ENCODE measurements at regions of chr7 and their contacts with region 1.

Region 1: GRCh38 chr7:5677538-5678294 is 103.7 kb downstream of the RNF216 start:
- DNase-seq: peak; percentile 76
- H3K4me3 Mint-ChIP-seq: no peak overlapping the region
- H3K27ac Mint-ChIP-seq: peak overlapping the region; percentile 39
- H3K4me1 Mint-ChIP-seq: peaks cover 12% of the 10 kb centered on the region
- H3K27me3 Mint-ChIP-seq: no peaks in the 10 kb centered on the region
- CTCF ChIP-seq: peak; percentile 75

Region 2: GRCh38 chr7:5557920-5558401 is 119.8 kb before region 1 on chr7:
- CTCF ChIA-PET with region 1: interaction called, 13 read pairs
- POLR2A ChIA-PET with region 1: interaction called, 3 read pairs
- intact Hi-C with region 1: no loop called
- DNase-seq: peak; percentile 67
- H3K4me3 Mint-ChIP-seq: peak overlapping the region; percentile 66
- H3K27ac Mint-ChIP-seq: peak overlapping the region; percentile 73
- H3K4me1 Mint-ChIP-seq: peaks cover 23% of the 10 kb centered on the region
- H3K27me3 Mint-ChIP-seq: no peaks in the 10 kb centered on the region
- CTCF ChIP-seq: no peak

Region 3: DNA sequence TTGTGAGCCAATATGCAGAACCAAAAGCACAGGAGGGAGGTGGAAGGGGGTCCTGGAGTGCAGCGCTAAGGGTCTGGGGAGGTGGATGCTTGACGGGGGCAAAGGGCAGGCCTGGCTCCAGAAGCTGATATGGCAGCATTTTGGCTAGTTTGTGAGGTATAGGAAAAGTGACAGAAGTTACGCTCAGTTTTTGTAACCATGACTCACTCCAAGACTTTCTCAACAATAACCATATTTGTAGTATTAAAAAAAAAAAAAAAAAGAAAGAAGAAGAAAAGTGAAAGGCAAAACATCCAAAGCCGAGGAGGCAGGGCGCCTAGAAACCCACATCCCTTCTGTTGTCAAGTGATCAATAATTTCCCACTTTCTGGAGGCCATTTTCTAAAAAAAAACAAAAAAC is 11.4 kb after region 1 on chr7:
- CTCF ChIA-PET with region 1: interaction called, 35 read pairs
- POLR2A ChIA-PET with region 1: interaction called, 12 read pairs
- intact Hi-C with region 1: no loop called
- DNase-seq: peak; percentile 57
- H3K4me3 Mint-ChIP-seq: no peak overlapping the region
- H3K27ac Mint-ChIP-seq: peak overlapping the region; percentile 97
- H3K4me1 Mint-ChIP-seq: peaks cover 45% of the 10 kb centered on the region
- H3K27me3 Mint-ChIP-seq: no peaks in the 10 kb centered on the region
- CTCF ChIP-seq: no peak

Region 4: DNA sequence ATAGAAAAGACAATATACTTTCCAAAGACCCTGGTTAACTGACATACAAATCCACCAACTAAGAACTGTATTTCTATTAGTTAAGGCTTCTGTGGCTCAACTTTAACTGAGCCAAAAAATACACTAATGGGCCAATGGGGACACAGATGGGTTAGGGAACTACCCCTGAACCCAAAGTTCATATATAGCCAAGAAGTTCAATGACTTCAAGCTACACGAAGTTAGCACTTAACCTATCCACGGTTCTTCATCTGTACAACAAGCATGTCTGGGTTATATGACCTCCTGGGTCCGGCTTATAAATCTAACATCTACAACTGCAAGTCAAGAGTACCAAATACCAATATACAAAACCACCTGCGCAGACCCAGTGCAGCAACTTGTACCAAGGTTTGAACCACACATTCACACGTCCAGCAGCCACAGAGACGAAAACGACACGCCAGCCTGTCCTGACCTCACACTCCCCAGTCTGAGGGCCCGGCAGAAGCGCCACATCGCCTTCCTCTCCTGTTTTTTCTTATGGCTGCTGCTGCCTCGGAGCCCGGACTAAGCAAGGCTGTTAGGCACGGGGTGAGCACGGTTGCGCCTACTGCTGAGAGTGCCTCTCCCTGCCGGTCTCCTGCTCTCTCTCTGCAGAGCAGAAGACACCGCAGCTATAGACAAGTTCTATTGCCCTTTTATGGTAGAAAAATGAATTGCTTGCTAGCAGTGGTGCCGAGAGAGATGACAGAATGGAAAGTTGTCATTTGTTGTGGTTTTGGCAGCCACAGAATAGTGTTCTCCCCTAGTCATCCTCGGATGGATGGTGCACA is 17.4 kb after region 1 on chr7:
- CTCF ChIA-PET with region 1: interaction called, 35 read pairs
- POLR2A ChIA-PET with region 1: interaction called, 12 read pairs
- intact Hi-C with region 1: no loop called
- DNase-seq: no peak
- H3K4me3 Mint-ChIP-seq: no peak overlapping the region
- H3K27ac Mint-ChIP-seq: no peak overlapping the region
- H3K4me1 Mint-ChIP-seq: peaks cover 47% of the 10 kb centered on the region
- H3K27me3 Mint-ChIP-seq: no peaks in the 10 kb centered on the region
- CTCF ChIP-seq: no peak

Region 5: GRCh38 chr7:5704534-5704922 is 26.8 kb after region 1 on chr7:
- CTCF ChIA-PET with region 1: interaction called, 32 read pairs
- POLR2A ChIA-PET with region 1: interaction called, 7 read pairs
- intact Hi-C with region 1: loop called (anchors 1 kb)
- DNase-seq: peak; percentile 86
- H3K4me3 Mint-ChIP-seq: no peak overlapping the region
- H3K27ac Mint-ChIP-seq: no peak overlapping the region
- H3K4me1 Mint-ChIP-seq: peaks cover 31% of the 10 kb centered on the region
- H3K27me3 Mint-ChIP-seq: no peaks in the 10 kb centered on the region
- CTCF ChIP-seq: peak; percentile 69

Measured in MCF 10A (cell line).